Naive thymus-derived CD4-positive, alpha-beta T cell (primary cell): ENCODE measurements at regions of chr1 and their contacts with region 1.

Region 1: DNA sequence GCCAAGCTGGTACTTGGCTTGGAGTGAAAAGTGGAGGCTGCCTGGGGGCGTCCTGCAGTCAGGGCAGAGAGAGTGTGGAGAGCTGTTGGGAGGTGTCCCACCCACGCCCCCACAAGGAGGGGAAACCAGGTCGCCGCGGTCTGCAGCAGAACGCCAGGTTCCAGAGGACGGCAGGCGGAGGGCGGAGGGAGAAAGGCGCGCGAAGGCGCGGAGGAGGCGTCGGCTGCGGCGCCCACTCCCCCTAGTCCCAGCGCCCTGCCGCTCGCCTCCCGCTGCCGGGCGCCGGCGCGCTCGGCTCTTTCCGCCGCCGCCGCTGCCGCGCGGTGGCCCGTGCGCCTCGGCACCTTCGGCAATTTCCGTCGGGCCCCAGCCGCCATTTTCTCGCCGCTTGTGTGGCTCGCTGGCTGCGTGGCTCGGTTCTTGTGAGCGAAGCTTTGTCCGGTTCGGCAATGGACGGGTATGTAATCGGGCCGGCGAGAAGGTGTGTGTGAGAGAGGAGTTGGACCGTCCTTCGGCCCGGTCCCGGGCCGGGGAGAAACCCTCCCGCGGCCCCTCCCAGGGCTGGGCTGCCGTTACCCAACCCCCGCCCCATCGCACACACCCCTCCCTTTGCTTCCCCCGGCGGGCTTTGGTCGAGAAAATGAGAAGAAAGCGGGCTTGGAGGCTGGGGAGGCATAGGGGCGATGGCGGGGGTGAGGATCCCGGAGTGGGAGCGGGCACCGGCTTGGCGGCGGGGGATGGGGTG is at the start of gene PTBP2:
- DNase-seq: peak; percentile 75 to 90 (median 86)
- ATAC-seq: peak; percentile 93
- H3K4me3 ChIP-seq: peak within 1 kb of the TSS; percentile 89
- H3K4me3 Mint-ChIP-seq: peak within 1 kb of the TSS; percentile 88 to 99 (median 97)
- H3K27ac ChIP-seq: peak within 1 kb of the TSS; percentile 84
- H3K27ac Mint-ChIP-seq: peak within 1 kb of the TSS; percentile 83 to 97 (median 95)
- H3K4me1 ChIP-seq: peaks cover 10 to 11% of the 10 kb centered on the region in 2 donors
- H3K4me1 Mint-ChIP-seq: peaks cover 17 to 35% (median 29%) of the 10 kb centered on the region in 7 donors
- H3K27me3 ChIP-seq: no peaks in the 10 kb centered on the region
- H3K27me3 Mint-ChIP-seq: peaks cover 0 to 16% (median 0%) of the 10 kb centered on the region in 5 donors
- total RNA-seq, gene PTBP2: 14.9 to 32.6 (median 25.6) TPM

Region 2: DNA sequence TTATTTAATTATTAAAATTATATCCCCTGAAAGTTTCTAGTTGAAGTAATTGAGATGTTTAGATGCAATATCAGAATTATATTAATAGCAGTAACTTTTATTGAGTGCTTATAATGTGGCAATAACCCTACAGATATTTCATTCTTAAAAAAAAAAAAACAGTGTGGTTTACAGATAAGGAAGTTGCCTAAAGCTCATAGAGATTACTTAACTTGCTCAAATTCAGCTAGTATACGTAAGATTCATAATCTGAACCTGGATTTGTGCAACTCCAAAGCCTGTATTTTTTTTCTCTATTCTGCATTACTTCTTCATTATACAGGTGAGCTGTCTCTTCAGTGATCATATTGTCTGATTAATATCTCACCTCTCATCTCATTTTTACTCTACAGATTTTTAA is 156.0 kb before region 1 on chr1:
- CTCF ChIA-PET with region 1: no interaction called
- POLR2A ChIA-PET with region 1: no interaction called
- intact Hi-C with region 1: no loop called
- DNase-seq: no peak
- ATAC-seq: no peak
- H3K4me3 ChIP-seq: no peak overlapping the region
- H3K4me3 Mint-ChIP-seq: no peak overlapping the region
- H3K27ac ChIP-seq: no peak overlapping the region
- H3K27ac Mint-ChIP-seq: no peak overlapping the region
- H3K4me1 ChIP-seq: no peaks in the 10 kb centered on the region
- H3K4me1 Mint-ChIP-seq: no peaks in the 10 kb centered on the region
- H3K27me3 ChIP-seq: no peaks in the 10 kb centered on the region
- H3K27me3 Mint-ChIP-seq: peaks cover 0 to 12% (median 9%) of the 10 kb centered on the region in 5 donors

Region 3: DNA sequence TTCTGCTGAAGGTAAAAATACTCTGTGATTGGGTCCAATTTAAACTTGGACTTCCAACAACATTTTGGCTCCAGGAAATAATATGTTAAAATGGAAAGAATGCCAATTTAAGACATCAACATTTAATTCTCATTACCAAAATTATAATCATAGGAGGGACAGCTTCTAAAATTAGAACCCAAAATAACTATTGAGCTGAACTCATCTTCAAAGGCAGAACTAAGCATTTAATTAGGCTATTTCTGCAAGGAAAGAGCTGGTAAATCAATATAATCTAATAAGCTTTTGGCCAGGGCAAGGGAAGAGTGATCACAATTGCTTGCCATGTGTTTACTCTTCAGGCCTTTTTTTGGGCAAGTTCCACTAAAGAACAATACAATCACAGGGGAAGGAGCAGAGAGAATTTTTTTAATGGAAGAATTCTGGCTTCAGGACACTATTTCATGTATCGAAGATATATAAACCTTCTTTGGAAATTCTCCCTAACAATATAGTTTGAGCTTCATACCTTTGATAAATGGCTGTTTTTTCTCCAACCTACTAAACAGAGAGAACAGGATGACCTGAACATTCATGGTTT is 133.1 kb before region 1 on chr1:
- CTCF ChIA-PET with region 1: no interaction called
- POLR2A ChIA-PET with region 1: no interaction called
- intact Hi-C with region 1: no loop called
- DNase-seq: no peak
- ATAC-seq: no peak
- H3K4me3 ChIP-seq: no peak overlapping the region
- H3K4me3 Mint-ChIP-seq: no peak overlapping the region
- H3K27ac ChIP-seq: no peak overlapping the region
- H3K27ac Mint-ChIP-seq: no peak overlapping the region
- H3K4me1 ChIP-seq: no peaks in the 10 kb centered on the region
- H3K4me1 Mint-ChIP-seq: no peaks in the 10 kb centered on the region
- H3K27me3 ChIP-seq: no peaks in the 10 kb centered on the region
- H3K27me3 Mint-ChIP-seq: peaks cover 0 to 4% (median 0%) of the 10 kb centered on the region in 5 donors

Region 4: GRCh38 chr1:96741335-96741734 is 19.7 kb after region 1 on chr1:
- CTCF ChIA-PET with region 1: no interaction called
- POLR2A ChIA-PET with region 1: no interaction called
- intact Hi-C with region 1: loop called in 1 of 2 experiments (anchors 2 kb)
- DNase-seq: no peak
- ATAC-seq: no peak
- H3K4me3 ChIP-seq: no peak overlapping the region
- H3K4me3 Mint-ChIP-seq: peak overlapping the region in 1 of 10 donors; percentile 1
- H3K27ac ChIP-seq: no peak overlapping the region
- H3K27ac Mint-ChIP-seq: no peak overlapping the region
- H3K4me1 ChIP-seq: no peaks in the 10 kb centered on the region
- H3K4me1 Mint-ChIP-seq: peaks cover 11 to 74% (median 55%) of the 10 kb centered on the region in 7 donors
- H3K27me3 ChIP-seq: no peaks in the 10 kb centered on the region
- H3K27me3 Mint-ChIP-seq: no peaks in the 10 kb centered on the region

Region 5: DNA sequence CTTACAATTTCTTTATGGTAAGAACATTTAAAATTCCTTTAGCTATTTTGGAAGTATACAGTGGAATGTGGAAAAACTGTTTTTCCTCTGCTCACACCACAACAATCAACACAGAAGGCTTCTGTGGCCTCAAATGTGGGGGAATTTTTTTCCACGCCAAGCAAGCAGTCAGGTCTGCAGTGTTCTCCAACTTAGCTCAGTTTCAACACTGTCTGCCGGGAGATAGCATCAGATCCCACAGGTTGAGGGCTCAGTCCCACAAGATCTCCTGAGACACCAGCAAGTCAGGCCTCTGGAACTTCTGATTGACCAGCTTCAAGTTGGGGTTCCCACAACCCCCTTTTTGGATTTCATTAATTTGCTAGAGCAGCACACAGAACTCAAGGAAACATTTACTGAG is 50.3 kb after region 1 on chr1:
- CTCF ChIA-PET with region 1: no interaction called
- POLR2A ChIA-PET with region 1: no interaction called
- intact Hi-C with region 1: loop called in 1 of 2 experiments (anchors 5 kb)
- DNase-seq: no peak
- ATAC-seq: no peak
- H3K4me3 ChIP-seq: no peak overlapping the region
- H3K4me3 Mint-ChIP-seq: no peak overlapping the region
- H3K27ac ChIP-seq: no peak overlapping the region
- H3K27ac Mint-ChIP-seq: no peak overlapping the region
- H3K4me1 ChIP-seq: no peaks in the 10 kb centered on the region
- H3K4me1 Mint-ChIP-seq: peaks cover 0 to 27% (median 1%) of the 10 kb centered on the region in 7 donors
- H3K27me3 ChIP-seq: no peaks in the 10 kb centered on the region
- H3K27me3 Mint-ChIP-seq: no peaks in the 10 kb centered on the region

Region 6: DNA sequence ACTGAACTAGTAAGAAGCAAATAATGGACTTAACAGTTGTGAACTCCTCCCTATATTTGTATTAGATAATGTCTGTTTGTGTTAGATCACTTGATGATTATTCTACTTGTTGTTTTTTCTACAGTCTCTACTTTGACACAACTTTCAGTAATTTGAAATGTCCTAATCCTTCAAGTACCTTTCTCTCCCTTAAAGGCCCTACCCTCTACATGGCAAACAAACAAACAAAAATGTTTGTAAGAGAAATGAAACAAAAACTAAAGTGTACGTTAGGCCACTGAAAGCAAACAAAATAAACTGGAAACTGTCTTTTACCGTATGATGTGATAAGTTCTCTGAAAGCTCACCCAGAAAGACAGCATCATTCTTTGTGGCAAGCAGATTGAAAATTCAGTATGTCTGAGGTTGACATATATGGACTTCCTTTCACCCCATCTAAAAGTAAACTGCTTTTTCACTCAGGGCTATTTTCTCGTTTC is 1684.0 kb after region 1 on chr1:
- CTCF ChIA-PET with region 1: no interaction called
- POLR2A ChIA-PET with region 1: no interaction called
- intact Hi-C with region 1: loop called in 1 of 2 experiments (anchors 10 kb)
- DNase-seq: no peak
- ATAC-seq: no peak
- H3K4me3 ChIP-seq: no peak overlapping the region
- H3K4me3 Mint-ChIP-seq: peak overlapping the region in 1 of 10 donors; percentile 86
- H3K27ac ChIP-seq: no peak overlapping the region
- H3K27ac Mint-ChIP-seq: peak overlapping the region in 1 of 9 donors; percentile 94
- H3K4me1 ChIP-seq: no peaks in the 10 kb centered on the region
- H3K4me1 Mint-ChIP-seq: peaks cover 0 to 37% (median 0%) of the 10 kb centered on the region in 7 donors
- H3K27me3 ChIP-seq: no peaks in the 10 kb centered on the region
- H3K27me3 Mint-ChIP-seq: no peaks in the 10 kb centered on the region